ENCODE measurements at regions of chr13 and their contacts with region 1.

Region 1: GRCh38 chr13:24557081-24557480 is 44.5 kb upstream of the PARP4 start:
- DNase-seq: no peak
- H3K4me3 ChIP-seq: no peak overlapping the region
- H3K27ac ChIP-seq: no peak overlapping the region
- H3K4me1 ChIP-seq: no peaks in the 10 kb centered on the region
- H3K27me3 ChIP-seq: peaks cover 2 to 11% of the 10 kb centered on the region in 2 experiments
- CTCF ChIP-seq: no peak
- POLR2A ChIP-seq: no peak

Region 2: GRCh38 chr13:24313439-24313838 is 243.6 kb before region 1 on chr13:
- CTCF ChIA-PET with region 1: interaction called, 3 read pairs
- POLR2A ChIA-PET with region 1: no interaction called
- dilution Hi-C with region 1: no loop called
- intact Hi-C with region 1: loop called (anchors 5 kb)
- DNase-seq: no peak
- H3K4me3 ChIP-seq: no peak overlapping the region
- H3K27ac ChIP-seq: no peak overlapping the region
- H3K4me1 ChIP-seq: no peaks in the 10 kb centered on the region
- H3K27me3 ChIP-seq: no peaks in the 10 kb centered on the region
- CTCF ChIP-seq: no peak
- POLR2A ChIP-seq: no peak

Region 3: GRCh38 chr13:24491845-24492244 is 65.2 kb before region 1 on chr13:
- CTCF ChIA-PET with region 1: no interaction called
- POLR2A ChIA-PET with region 1: no interaction called
- dilution Hi-C with region 1: no loop called
- intact Hi-C with region 1: loop called (anchors 2 kb)
- DNase-seq: peak; percentile 54
- H3K4me3 ChIP-seq: no peak overlapping the region
- H3K27ac ChIP-seq: no peak overlapping the region
- H3K4me1 ChIP-seq: no peaks in the 10 kb centered on the region
- H3K27me3 ChIP-seq: no peaks in the 10 kb centered on the region
- CTCF ChIP-seq: peak; percentile 13 to 23
- POLR2A ChIP-seq: no peak

Region 4: GRCh38 chr13:24540236-24541126 is 16.6 kb before region 1 on chr13:
- CTCF ChIA-PET with region 1: no interaction called
- POLR2A ChIA-PET with region 1: no interaction called
- dilution Hi-C with region 1: no loop called
- intact Hi-C with region 1: no loop called
- DNase-seq: peak; percentile 13
- H3K4me3 ChIP-seq: no peak overlapping the region
- H3K27ac ChIP-seq: no peak overlapping the region
- H3K4me1 ChIP-seq: peaks cover 3% of the 10 kb centered on the region
- H3K27me3 ChIP-seq: peaks cover 9 to 35% of the 10 kb centered on the region in 2 experiments
- CTCF ChIP-seq: peak; percentile 48 to 66
- POLR2A ChIP-seq: no peak

Measured in endothelial cell of umbilical vein (primary cell).